ENCODE measurements at regions of chr11 and their contacts with region 1.

Region 1: GRCh38 chr11:122253589-122254231 is 137.7 kb upstream of the BLID start:
- DNase-seq: no peak

Region 2: DNA sequence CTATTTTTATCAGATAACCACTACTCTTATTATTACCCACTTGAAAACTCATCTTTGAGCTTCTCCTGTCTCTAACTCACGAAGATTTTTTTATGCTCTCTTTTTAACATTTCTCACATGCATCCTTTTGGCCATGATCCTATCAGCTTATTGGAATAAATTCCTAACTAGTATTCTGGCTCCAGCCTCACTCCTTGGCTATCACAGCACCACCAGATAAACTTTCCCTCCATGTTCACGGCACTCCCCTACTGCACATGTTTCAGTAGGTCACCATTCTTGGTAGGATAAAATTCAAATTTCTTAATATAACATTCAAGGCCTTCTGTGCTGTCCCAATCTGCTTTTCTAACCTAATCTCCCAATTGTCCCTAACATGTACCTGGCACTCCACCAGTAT is 215.3 kb after region 1 on chr11:
- intact Hi-C with region 1: loop called in 1 of 2 experiments (anchors 2 kb)
- DNase-seq: no peak

Measured in posterior vena cava (tissue), 2 donors.